ENCODE measurements at regions of chr16 and their contacts with region 1.

Region 1: GRCh38 chr16:19167710-19168370 is at the start of gene SYT17:
- DNase-seq: peak; percentile 39
- H3K4me3 ChIP-seq: peak within 1 kb of the TSS in 2 of 3 experiments; percentile 37 to 40
- H3K27ac ChIP-seq: no peak within 1 kb of the TSS
- H3K4me1 ChIP-seq: peaks cover 17% of the 10 kb centered on the region
- H3K27me3 ChIP-seq: peaks cover 12% of the 10 kb centered on the region
- CTCF ChIP-seq: peak; percentile 42 to 56
- total RNA-seq, gene SYT17: 0.17 to 0.24 TPM

Region 2: GRCh38 chr16:19086322-19087199 is 81.3 kb before region 1 on chr16:
- CTCF ChIA-PET with region 1: no interaction called
- dilution Hi-C with region 1: no loop called
- in situ Hi-C with region 1: loop called (anchors 5 to 10 kb)
- intact Hi-C with region 1: loop called (anchors 5 kb)
- DNase-seq: peak; percentile 74
- H3K4me3 ChIP-seq: peak overlapping the region; percentile 28 to 48 (median 34)
- H3K27ac ChIP-seq: no peak overlapping the region
- H3K4me1 ChIP-seq: peaks cover 12% of the 10 kb centered on the region
- H3K27me3 ChIP-seq: no peaks in the 10 kb centered on the region
- CTCF ChIP-seq: peak; percentile 73 to 99

Region 3: GRCh38 chr16:19153876-19154275 is 14.0 kb before region 1 on chr16:
- CTCF ChIA-PET with region 1: no interaction called
- dilution Hi-C with region 1: no loop called
- in situ Hi-C with region 1: no loop called
- intact Hi-C with region 1: no loop called
- DNase-seq: no peak
- H3K4me3 ChIP-seq: no peak overlapping the region
- H3K27ac ChIP-seq: no peak overlapping the region
- H3K4me1 ChIP-seq: no peaks in the 10 kb centered on the region
- H3K27me3 ChIP-seq: no peaks in the 10 kb centered on the region
- CTCF ChIP-seq: no peak

Region 4: GRCh38 chr16:19696328-19696727 is 528.5 kb after region 1 on chr16:
- CTCF ChIA-PET with region 1: no interaction called
- dilution Hi-C with region 1: no loop called
- in situ Hi-C with region 1: no loop called
- intact Hi-C with region 1: no loop called
- DNase-seq: peak; percentile 38
- H3K4me3 ChIP-seq: no peak overlapping the region
- H3K27ac ChIP-seq: no peak overlapping the region
- H3K4me1 ChIP-seq: no peaks in the 10 kb centered on the region
- H3K27me3 ChIP-seq: no peaks in the 10 kb centered on the region
- CTCF ChIP-seq: no peak